ENCODE measurements at regions of chr11 and their contacts with region 1.

Region 1: GRCh38 chr11:65546217-65546958 is 11.8 kb downstream of the LTBP3 start:
- DNase-seq: peak; percentile 99
- ATAC-seq: peak; percentile 89
- H3K4me3 Mint-ChIP-seq: peak overlapping the region; percentile 85
- H3K27ac Mint-ChIP-seq: peak overlapping the region; percentile 89
- H3K4me1 Mint-ChIP-seq: peaks cover 54% of the 10 kb centered on the region
- H3K27me3 Mint-ChIP-seq: no peaks in the 10 kb centered on the region
- CTCF ChIP-seq: no peak

Region 2: DNA sequence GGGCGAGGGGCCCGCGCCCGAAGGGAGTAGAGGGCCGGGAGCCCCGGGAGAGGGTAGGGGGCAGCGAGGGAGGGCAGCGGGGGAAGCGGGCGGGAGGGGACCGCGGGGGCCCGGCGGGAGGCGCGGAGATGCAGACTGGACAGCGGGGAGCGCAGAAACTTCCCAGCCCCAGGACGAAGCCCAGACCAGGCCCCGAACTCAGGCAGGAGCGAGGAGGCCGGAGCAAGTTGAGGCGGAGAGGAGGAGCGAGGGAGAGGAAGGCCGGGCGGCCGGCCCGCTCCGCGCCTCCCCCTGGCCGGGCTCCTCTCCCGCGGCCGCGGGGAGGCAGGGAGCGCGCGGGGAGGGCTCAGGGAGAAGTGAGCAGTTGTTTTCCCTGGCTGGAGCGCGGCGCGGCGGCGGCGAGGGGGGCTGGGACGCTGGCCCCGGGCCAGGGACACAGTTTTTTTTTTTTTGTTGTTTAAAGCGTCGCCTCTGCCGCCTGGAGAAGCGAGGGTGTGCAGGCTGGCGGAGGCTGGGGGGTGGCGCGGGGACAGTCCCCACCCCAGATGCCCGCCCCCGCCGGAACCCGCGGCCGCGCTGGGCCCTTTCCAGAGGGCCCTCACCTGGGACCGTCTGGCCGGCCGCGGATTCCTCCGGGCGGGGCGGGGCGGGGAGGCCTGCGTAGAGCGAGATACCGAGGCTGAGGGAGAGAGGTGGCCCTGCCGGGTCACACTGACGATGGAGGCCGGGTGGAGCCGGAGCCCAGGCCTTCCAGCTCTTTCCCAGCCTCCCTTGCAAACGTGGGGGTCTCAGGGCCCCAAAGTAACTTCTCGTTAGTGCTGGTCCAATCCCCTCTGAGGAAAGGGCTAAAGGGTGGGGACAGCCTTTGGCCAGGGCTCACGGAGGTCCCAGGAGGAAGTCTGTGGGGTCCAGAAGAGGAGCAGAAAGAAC is 11.9 kb after region 1 on chr11 and contains the start of gene LTBP3:
- CTCF ChIA-PET with region 1: interaction called, 47 read pairs
- POLR2A ChIA-PET with region 1: interaction called, 38 read pairs
- intact Hi-C with region 1: loop called (anchors 1 kb)
- DNase-seq: peak; percentile 44
- ATAC-seq: peak; percentile 61
- H3K4me3 Mint-ChIP-seq: peak within 1 kb of the TSS; percentile 79
- H3K27ac Mint-ChIP-seq: peak within 1 kb of the TSS; percentile 72
- H3K4me1 Mint-ChIP-seq: peaks cover 29% of the 10 kb centered on the region
- H3K27me3 Mint-ChIP-seq: peaks cover 4% of the 10 kb centered on the region
- CTCF ChIP-seq: no peak
- total RNA-seq, gene LTBP3: 25.0 and 25.3 TPM in 2 replicates

Region 3: DNA sequence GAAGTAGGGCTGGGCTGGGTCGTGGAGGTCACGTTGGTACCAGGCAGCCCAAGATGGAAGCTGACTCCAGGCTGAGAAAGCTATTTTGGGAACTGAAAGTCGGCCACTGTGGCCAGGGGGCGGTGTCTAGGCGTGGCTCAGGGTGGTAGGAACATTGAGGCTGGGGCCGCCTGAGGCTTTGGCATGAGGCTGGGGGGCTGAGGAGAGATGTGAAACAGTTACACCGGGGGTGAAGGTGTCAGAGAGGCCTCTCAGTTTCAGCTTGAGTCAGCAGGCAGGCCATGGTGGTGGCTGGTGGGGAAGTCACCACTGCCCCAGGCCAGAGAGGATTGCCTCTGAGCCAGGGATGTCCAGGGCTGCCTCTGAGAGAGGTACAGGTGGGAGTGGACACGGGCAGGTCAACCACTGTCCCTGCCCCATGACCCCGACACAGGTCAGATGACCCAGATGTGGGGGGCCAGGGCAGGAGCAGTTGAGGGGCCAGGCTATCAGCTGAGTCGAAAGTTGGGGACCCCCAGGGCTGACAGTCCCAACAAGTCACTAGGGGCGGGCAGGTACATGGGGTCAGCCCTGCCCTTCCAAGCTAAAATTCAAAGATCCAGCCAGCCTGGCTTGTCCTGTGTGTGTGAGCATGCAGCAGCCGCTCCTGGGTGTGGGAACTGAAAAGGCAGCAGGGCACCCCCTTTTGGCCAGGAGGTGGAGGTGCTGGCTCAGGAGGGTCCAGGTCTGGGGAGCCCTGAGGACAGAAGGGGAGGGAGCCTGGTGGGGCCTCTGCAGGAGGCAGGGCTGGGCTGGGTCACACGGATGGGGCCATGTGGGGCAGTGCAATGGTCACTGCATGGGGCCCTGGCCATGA is 42.0 kb after region 1 on chr11:
- CTCF ChIA-PET with region 1: interaction called, 52 read pairs
- POLR2A ChIA-PET with region 1: interaction called, 52 read pairs
- intact Hi-C with region 1: no loop called
- DNase-seq: peak; percentile 76
- ATAC-seq: peak; percentile 80
- H3K4me3 Mint-ChIP-seq: peak overlapping the region; percentile 70
- H3K27ac Mint-ChIP-seq: peak overlapping the region; percentile 96
- H3K4me1 Mint-ChIP-seq: peaks cover 44% of the 10 kb centered on the region
- H3K27me3 Mint-ChIP-seq: no peaks in the 10 kb centered on the region
- CTCF ChIP-seq: peak; percentile 38